ENCODE measurements at regions of chr7 and their contacts with region 1.

Region 1: DNA sequence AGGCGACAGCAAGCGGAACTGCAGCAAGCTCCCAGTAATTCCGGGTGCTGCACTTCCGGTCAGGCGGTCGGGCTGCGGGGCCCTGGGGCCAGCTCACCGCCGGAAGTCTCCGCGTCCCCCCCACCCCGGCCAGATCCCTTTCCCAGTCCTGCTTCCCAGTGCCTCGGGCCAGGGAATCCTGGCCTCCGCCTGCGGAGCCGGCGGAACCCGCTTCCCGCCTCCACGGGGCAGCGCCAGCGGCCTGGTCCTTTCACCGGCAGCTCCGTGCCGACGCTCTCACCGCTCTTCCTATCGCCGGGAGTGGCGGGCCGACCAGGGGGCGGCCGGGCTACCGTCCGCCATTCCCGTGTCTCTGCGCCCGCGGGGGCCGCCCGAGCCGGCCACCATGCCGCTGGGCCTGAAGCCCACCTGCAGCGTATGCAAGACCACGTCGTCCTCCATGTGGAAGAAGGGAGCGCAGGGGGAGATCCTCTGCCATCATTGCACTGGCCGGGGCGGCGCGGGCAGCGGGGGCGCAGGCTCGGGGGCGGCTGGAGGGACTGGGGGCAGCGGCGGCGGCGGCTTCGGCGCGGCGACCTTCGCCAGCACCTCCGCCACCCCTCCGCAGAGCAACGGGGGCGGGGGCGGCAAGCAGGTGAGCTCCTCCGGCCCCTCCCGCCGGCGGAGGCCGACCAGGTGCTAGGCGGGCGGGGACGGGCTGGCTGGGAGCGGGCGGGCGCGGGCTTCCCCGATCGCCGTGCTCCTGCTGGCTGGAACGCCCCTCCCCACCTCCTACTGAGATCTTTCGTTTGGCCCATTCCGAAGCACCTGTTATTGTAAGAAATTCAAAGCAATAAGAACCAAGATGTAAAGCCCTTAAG is at the start of gene GATAD1:
- DNase-seq: peak; percentile 94

Region 2: GRCh38 chr7:92134271-92135051 is 313.1 kb before region 1 on chr7 and contains the start of gene CYP51A1:
- CTCF ChIA-PET with region 1: interaction called, 4 read pairs
- POLR2A ChIA-PET with region 1: interaction called, 12 read pairs
- DNase-seq: peak; percentile 85

Region 3: GRCh38 chr7:92245487-92246362 is 201.8 kb before region 1 on chr7 and contains the starts of genes ANKIB1 and KRIT1:
- CTCF ChIA-PET with region 1: interaction called, 3 read pairs
- POLR2A ChIA-PET with region 1: interaction called, 22 read pairs
- DNase-seq: peak; percentile 87

Region 4: DNA sequence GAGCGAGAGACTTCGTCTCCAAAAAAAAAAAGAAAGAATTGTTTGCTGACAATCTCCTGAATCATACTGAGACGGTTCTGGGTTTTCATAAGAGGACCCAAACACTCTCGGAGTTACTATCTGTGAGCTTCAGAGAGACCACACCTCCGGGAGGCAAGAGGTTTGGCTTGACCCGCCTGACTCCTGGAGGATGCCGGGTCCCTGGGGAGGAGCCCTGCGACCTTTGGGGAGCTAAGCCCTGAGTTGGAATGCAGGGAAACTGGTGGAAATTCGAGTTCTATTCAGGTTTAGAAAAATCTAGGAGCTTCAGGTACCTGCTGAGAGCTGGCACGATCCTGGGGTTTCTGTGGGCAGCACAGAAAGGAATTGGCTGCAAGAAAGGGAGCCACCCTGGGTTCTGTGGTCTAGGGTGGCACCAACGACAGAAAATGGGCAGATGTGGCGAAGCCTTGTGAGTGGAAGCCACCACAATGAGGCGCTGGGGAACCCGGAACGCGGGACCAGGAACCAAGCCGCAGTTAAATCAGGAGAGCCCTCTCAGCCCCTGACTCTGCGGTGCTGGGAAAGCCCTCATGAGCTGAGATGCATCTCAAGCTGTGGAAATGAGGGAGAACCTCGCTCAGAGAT is 22.1 kb before region 1 on chr7:
- CTCF ChIA-PET with region 1: interaction called, 16 read pairs
- POLR2A ChIA-PET with region 1: interaction called, 17 read pairs
- DNase-seq: no peak

Region 5: DNA sequence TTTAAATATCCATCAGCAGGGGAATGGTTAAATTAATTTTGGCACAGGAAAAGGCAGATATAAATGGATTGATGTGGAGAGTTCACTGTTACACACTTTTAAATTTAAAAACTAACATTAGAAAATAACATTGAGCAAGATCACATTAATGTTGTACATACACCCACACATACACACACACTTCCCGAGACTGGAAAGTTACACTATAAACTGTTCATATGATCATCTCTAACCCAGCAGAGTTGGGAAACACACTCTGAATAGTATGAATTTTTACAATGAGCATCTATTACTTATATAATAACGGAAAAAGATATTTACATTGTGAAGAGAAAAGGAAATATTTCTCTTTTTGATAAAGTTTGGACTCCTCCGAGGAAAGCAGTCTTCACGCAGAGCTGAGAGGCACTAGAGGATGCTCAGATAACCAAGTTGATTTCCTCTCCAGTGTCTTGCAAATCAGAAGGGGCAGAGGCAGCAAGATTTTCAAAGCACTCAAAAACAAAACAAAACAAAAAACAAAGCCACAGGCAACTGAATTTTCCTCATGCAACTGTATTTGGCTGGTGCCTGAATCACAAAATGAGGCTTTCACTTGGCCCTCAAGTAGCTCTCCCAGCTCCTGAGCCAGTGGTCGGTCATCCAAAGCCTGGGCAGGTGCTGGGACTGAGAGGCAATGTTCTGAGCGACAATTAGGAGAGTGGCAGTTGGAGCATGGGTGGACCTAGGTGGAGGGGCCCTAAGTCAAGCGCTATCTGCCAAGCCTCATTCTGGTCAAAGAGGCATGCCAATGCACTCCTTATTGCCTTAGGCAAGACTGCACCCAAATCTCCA is 10.7 kb before region 1 on chr7:
- CTCF ChIA-PET with region 1: no interaction called
- POLR2A ChIA-PET with region 1: no interaction called
- DNase-seq: no peak

Region 6: DNA sequence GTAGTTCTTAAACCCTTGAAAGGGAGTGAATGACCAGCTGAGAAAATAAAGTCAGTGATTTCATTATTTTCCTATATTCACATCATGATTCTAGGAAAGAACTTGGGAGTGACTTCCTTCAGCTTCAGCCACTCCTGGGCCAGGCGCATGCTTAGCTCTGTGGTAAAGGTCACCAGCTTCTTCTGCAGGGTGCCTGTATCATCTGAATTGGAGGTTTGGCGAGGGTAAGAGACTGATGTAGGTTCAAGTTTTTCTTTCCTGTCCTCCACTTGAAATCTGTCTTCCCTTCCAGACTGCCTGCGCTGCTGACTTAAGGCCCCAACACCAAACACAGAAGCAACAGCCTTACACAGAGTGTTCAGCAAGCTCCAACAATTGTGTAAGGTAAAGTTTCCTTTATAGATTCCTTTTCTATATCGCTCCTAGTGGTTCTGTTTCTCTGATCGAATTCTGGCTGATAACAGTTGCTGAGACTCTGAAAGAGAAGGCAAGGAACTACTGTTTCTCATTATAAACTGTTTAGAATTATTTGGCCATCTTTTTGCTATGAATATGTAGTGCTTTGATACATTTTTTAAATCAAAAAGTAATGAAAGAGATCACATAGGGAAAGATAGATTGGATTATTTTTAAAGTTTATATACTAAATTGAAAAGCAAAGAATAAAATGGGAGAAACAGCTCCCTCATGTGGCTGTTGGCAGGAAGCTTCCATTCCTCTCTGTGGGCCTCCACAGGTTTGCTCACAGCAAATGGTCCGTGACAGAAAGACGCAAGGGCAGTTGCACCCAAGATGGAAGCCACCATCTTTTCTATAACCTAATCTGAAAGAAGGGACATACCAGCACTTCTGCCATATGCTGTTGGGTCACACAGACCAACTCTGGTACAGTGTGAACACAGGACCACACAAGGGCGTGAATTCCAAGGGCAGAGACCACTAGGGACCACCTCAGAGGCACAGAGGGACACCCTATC is 13.7 kb after region 1 on chr7:
- CTCF ChIA-PET with region 1: interaction called, 9 read pairs
- POLR2A ChIA-PET with region 1: interaction called, 20 read pairs
- DNase-seq: peak; percentile 69

Region 7: GRCh38 chr7:92809397-92810241 is 362.0 kb after region 1 on chr7:
- CTCF ChIA-PET with region 1: no interaction called
- POLR2A ChIA-PET with region 1: no interaction called
- DNase-seq: peak; percentile 49

Measured in HEK293T (cell line).